Endothelial cell of umbilical vein (primary cell): ENCODE measurements at regions of chr18 and their contacts with region 1.

Region 1: GRCh38 chr18:24543805-24544498 is 83.5 kb downstream of the HRH4 start:
- DNase-seq: peak; percentile 42
- H3K4me3 ChIP-seq: no peak overlapping the region
- H3K27ac ChIP-seq: no peak overlapping the region
- H3K4me1 ChIP-seq: no peaks in the 10 kb centered on the region
- H3K27me3 ChIP-seq: peaks cover 5 to 7% of the 10 kb centered on the region in 2 experiments
- CTCF ChIP-seq: peak; percentile 30 to 32
- POLR2A ChIP-seq: no peak

Region 2: GRCh38 chr18:24726727-24727492 is 183.0 kb after region 1 on chr18:
- CTCF ChIA-PET with region 1: interaction called, 43 read pairs
- POLR2A ChIA-PET with region 1: no interaction called
- dilution Hi-C with region 1: no loop called
- intact Hi-C with region 1: loop called (anchors 1 kb)
- DNase-seq: peak; percentile 77
- H3K4me3 ChIP-seq: peak overlapping the region in 1 of 3 experiments; percentile 10
- H3K27ac ChIP-seq: no peak overlapping the region
- H3K4me1 ChIP-seq: no peaks in the 10 kb centered on the region
- H3K27me3 ChIP-seq: peaks cover 18 to 21% of the 10 kb centered on the region in 2 experiments
- CTCF ChIP-seq: peak; percentile 77 to 87
- POLR2A ChIP-seq: no peak

Region 3: GRCh38 chr18:24868760-24869237 is 324.8 kb after region 1 on chr18:
- CTCF ChIA-PET with region 1: no interaction called
- POLR2A ChIA-PET with region 1: no interaction called
- dilution Hi-C with region 1: no loop called
- intact Hi-C with region 1: loop called (anchors 10 kb)
- DNase-seq: peak; percentile 61
- H3K4me3 ChIP-seq: no peak overlapping the region
- H3K27ac ChIP-seq: no peak overlapping the region
- H3K4me1 ChIP-seq: peaks cover 14% of the 10 kb centered on the region
- H3K27me3 ChIP-seq: no peaks in the 10 kb centered on the region
- CTCF ChIP-seq: no peak
- POLR2A ChIP-seq: no peak